Activated CD4-positive, alpha-beta memory T cell treated with anti-CD3 and anti-CD28 coated beads for 36 hours (primary cell): ENCODE measurements at regions of chr6 and their contacts with region 1.

Region 1: GRCh38 chr6:151690768-151691562 is 116.5 kb upstream of the ESR1 start:
- DNase-seq: peak; percentile 63
- H3K4me3 Mint-ChIP-seq: peak overlapping the region; percentile 66
- H3K27ac Mint-ChIP-seq: peak overlapping the region; percentile 47
- H3K4me1 Mint-ChIP-seq: peaks cover 26% of the 10 kb centered on the region
- H3K27me3 Mint-ChIP-seq: peaks cover 5% of the 10 kb centered on the region

Region 2: GRCh38 chr6:151702851-151703611 is 12.1 kb after region 1 on chr6:
- CTCF ChIA-PET with region 1: interaction called, 47 read pairs
- POLR2A ChIA-PET with region 1: interaction called, 28 read pairs
- intact Hi-C with region 1: loop called (anchors 1 kb)
- DNase-seq: no peak
- H3K4me3 Mint-ChIP-seq: no peak overlapping the region
- H3K27ac Mint-ChIP-seq: peak overlapping the region; percentile 56
- H3K4me1 Mint-ChIP-seq: peaks cover 44% of the 10 kb centered on the region
- H3K27me3 Mint-ChIP-seq: peaks cover 6% of the 10 kb centered on the region

Region 3: DNA sequence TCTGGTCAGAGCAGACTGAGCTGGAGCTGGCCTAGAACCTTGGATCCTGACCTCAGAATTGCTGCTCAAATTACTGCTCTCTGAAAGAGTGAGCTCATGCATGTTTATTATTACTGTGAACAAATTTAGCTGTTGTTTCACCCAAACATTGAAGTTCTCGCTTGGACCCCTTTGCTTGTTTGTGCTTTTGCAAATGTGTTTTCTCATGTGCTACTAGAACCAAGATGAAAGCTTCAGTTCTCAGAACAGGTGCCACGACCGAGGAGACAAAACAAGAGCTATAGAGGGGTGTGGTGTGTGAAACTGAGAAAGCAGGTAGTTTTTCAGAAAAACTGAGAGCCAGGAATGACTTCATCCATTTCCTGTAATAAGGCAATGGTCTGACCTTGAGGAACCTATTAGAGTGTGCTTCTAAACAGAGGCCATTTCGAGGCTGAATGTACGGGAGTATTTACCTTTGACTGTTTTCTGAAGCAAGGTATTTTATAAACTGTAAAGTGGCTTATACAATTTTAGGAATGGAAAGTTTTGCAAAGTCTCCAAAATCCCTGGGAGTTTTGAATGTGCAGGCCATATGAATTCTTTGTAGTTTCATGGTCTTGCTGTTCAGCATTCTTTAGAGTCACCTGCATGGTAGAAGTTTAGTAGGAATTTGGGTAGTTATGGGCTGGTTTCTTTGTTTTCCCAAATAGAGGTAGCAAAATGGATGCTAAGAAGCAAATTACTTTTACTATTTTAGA is 66.7 kb after region 1 on chr6:
- CTCF ChIA-PET with region 1: interaction called, 6 read pairs
- POLR2A ChIA-PET with region 1: interaction called, 6 read pairs
- intact Hi-C with region 1: loop called (anchors 1 kb)
- DNase-seq: peak; percentile 55
- H3K4me3 Mint-ChIP-seq: peak overlapping the region; percentile 42
- H3K27ac Mint-ChIP-seq: peak overlapping the region; percentile 61
- H3K4me1 Mint-ChIP-seq: peaks cover 23% of the 10 kb centered on the region
- H3K27me3 Mint-ChIP-seq: no peaks in the 10 kb centered on the region

Region 4: GRCh38 chr6:151807533-151808370 is 116.8 kb after region 1 on chr6 and contains the start of gene ESR1:
- CTCF ChIA-PET with region 1: no interaction called
- POLR2A ChIA-PET with region 1: no interaction called
- intact Hi-C with region 1: loop called (anchors 1 kb)
- DNase-seq: peak; percentile 22
- H3K4me3 Mint-ChIP-seq: peak within 1 kb of the TSS; percentile 68
- H3K27ac Mint-ChIP-seq: no peak within 1 kb of the TSS
- H3K4me1 Mint-ChIP-seq: peaks cover 9% of the 10 kb centered on the region
- H3K27me3 Mint-ChIP-seq: peaks cover 26% of the 10 kb centered on the region
- total RNA-seq, gene ESR1: 0.10 TPM in 1 of 2 experiments, not detected in the other

Region 5: DNA sequence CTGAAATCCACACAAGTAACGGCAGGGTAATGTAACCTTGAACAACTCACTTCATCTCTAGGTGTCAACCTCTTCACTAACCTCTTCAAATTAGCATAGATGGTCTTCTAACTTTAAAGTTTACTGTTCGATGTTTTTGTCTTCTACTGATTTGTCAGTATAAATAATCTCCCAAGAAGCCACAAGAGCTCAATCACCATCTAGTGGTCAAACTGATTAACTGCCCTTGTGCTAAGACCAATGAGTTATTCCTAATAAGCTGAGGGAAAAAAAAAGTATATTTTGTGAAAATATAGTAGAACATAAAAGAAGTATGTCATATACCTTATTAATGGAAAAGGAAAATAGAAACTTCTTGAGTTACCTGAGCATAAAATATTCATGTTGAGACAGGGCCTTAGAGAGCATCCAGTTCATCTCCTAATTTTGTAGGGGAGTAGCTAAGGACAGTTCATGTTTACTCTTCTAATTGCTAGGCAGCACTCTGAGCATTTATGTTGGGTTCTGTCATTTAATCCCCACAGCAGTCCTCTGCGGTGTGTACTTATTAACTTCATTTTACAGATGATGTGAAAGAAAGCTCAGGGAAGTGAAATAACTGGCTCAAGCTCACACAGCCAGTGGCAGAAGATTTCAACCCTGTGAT is 433.6 kb after region 1 on chr6:
- CTCF ChIA-PET with region 1: interaction called, 25 read pairs
- POLR2A ChIA-PET with region 1: no interaction called
- intact Hi-C with region 1: loop called (anchors 1 kb)
- DNase-seq: no peak
- H3K4me3 Mint-ChIP-seq: no peak overlapping the region
- H3K27ac Mint-ChIP-seq: no peak overlapping the region
- H3K4me1 Mint-ChIP-seq: no peaks in the 10 kb centered on the region
- H3K27me3 Mint-ChIP-seq: no peaks in the 10 kb centered on the region